Adrenal gland (tissue), 19 donors: ENCODE measurements at regions of chr16 and their contacts with region 1.

Region 1: GRCh38 chr16:527006-527753 is at the start of gene CAPN15:
- DNase-seq: peak; percentile 86 to 93 (median 89)
- H3K4me3 ChIP-seq: peak within 1 kb of the TSS; percentile 48 to 68 (median 54)
- H3K27ac ChIP-seq: peak within 1 kb of the TSS; percentile 89 to 99 (median 97)
- H3K4me1 ChIP-seq: peaks cover 29 to 43% of the 10 kb centered on the region in 2 donors
- H3K27me3 ChIP-seq: no peaks in the 10 kb centered on the region
- CTCF ChIP-seq: peak in 5 of 6 experiments; percentile 29 to 72 (median 47)
- POLR2A ChIP-seq: peak; percentile 80 to 81
- total RNA-seq, gene CAPN15: 12.4 to 45.8 (median 42.9) TPM

Region 2: GRCh38 chr16:391885-392335 is 135.3 kb before region 1 on chr16:
- intact Hi-C with region 1: loop called in 1 of 2 experiments (anchors 10 kb)
- DNase-seq: peak in 6 of 7 donors; percentile 51 to 77 (median 69)
- H3K4me3 ChIP-seq: no peak overlapping the region
- H3K27ac ChIP-seq: no peak overlapping the region
- H3K4me1 ChIP-seq: peaks cover 22 to 23% of the 10 kb centered on the region in 2 donors
- H3K27me3 ChIP-seq: no peaks in the 10 kb centered on the region
- CTCF ChIP-seq: peak; percentile 49 to 80 (median 57)
- POLR2A ChIP-seq: no peak

Region 3: DNA sequence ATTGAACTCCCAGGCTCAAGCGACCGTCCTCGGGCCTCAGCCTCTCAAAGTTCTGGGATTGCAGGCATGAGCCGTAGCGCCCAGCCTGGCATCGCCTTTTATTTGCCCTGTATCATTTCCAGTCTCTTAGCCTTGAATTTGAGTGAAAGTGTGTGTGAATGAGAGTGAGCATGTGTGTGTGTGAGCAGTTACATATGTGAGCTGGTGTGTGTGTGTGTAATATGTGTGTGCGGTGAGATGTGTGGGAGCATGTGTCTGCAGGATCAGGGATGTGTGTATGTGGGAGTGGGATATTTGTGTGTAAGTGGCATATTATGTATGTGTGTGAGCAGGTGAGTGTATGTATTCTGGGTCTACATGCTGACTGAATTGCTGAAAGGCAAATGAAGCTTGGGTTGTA is 96.3 kb before region 1 on chr16:
- intact Hi-C with region 1: loop called in 1 of 2 experiments (anchors 10 kb)
- DNase-seq: no peak
- H3K4me3 ChIP-seq: no peak overlapping the region
- H3K27ac ChIP-seq: no peak overlapping the region
- H3K4me1 ChIP-seq: peaks cover 9 to 31% of the 10 kb centered on the region in 2 donors
- H3K27me3 ChIP-seq: no peaks in the 10 kb centered on the region
- CTCF ChIP-seq: no peak
- POLR2A ChIP-seq: no peak

Region 4: GRCh38 chr16:590165-591065 is 63.2 kb after region 1 on chr16:
- intact Hi-C with region 1: no loop called
- DNase-seq: peak in 6 of 7 donors; percentile 43 to 73 (median 64)
- H3K4me3 ChIP-seq: peak overlapping the region; percentile 49 to 94 (median 83)
- H3K27ac ChIP-seq: peak overlapping the region in 4 of 5 donors; percentile 60 to 100 (median 79)
- H3K4me1 ChIP-seq: peaks cover 24 to 37% of the 10 kb centered on the region in 2 donors
- H3K27me3 ChIP-seq: no peaks in the 10 kb centered on the region
- CTCF ChIP-seq: no peak
- POLR2A ChIP-seq: peak; percentile 46 to 56

Region 5: DNA sequence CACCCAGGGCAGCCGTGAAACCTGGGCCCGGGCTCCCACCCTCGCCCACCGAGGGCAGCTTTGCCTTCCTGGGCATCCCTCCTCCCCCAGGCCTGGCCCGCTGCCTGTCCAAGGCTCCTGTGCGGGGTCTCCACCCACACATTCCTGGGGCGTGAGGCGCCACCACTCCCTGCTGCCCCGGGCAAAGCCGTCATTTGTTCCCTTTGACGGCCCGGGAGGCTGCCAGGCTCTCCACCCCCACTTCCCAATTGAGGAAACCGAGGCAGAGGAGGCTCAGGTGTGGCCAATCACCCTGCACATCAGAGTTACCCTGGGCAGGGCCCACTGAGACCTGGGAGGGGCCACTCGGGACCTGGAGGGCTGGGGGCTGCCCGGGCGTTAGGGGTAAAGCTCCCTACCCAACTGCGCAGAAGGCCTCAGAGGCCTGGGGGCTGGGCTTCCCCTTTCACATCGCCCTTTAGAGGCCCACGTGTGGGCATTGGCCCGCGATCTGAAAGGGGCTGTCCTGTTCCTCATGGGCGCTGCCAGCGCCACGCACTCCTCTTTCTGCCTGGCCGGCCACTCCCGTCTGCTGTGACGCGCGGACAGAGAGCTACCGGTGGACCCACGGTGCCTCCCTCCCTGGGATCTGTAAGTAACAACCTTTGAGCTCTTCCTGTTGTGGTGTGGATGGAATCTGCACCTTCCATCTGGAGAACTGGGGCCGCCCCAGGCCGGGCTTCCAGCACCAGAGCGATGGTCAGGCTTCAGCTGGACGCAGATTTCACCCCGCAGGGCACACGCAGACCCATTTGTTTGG is 233.6 kb after region 1 on chr16 and contains the start of gene MSLN:
- intact Hi-C with region 1: no loop called
- DNase-seq: no peak
- H3K4me3 ChIP-seq: no peak within 1 kb of the TSS
- H3K27ac ChIP-seq: no peak within 1 kb of the TSS
- H3K4me1 ChIP-seq: no peaks in the 10 kb centered on the region
- H3K27me3 ChIP-seq: no peaks in the 10 kb centered on the region
- CTCF ChIP-seq: no peak
- POLR2A ChIP-seq: no peak
- total RNA-seq, gene MSLN: 0.17 to 0.46 (median 0.43) TPM in 3 of 9 donors, not detected in the others

Region 6: DNA sequence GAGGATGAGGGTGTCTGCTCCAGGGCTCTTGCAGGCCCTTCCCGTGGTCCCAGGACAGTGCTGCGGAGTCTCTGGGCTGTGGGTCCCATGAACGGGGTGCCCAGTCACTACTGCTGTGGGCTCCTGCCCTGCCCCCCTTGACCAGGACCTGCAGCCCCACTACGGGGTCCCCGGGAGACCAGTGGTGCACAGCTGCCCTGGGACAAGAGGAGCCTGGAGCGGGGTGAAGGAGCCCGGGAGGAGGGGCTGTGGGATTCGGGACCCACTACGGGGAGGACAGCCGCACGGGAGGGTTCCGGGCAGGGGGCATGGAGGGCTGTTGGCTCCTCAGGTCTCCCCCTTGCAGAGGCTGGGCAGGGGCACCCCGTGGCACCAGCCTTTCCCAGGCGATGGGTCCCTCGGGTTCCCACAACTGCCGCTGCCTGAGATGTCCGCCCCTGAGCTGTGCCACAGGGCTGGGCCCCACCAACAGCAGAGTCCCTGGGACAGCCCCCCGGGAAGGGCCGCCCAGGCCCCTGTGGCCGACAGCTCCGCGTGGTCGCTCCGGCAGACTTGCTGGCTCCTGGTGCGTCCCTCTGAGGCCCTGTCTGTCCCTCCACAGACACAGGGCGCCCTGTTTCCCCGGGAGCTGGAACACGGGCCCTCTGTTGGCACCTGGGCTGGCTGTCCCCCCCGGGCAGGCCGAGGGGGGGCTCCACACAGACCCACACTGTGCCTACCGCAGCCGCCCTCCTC is 325.4 kb after region 1 on chr16:
- intact Hi-C with region 1: no loop called
- DNase-seq: no peak
- H3K4me3 ChIP-seq: no peak overlapping the region
- H3K27ac ChIP-seq: no peak overlapping the region
- H3K4me1 ChIP-seq: no peaks in the 10 kb centered on the region
- H3K27me3 ChIP-seq: no peaks in the 10 kb centered on the region
- CTCF ChIP-seq: no peak
- POLR2A ChIP-seq: no peak